ENCODE measurements at regions of chr20 and their contacts with region 1.

Region 1: DNA sequence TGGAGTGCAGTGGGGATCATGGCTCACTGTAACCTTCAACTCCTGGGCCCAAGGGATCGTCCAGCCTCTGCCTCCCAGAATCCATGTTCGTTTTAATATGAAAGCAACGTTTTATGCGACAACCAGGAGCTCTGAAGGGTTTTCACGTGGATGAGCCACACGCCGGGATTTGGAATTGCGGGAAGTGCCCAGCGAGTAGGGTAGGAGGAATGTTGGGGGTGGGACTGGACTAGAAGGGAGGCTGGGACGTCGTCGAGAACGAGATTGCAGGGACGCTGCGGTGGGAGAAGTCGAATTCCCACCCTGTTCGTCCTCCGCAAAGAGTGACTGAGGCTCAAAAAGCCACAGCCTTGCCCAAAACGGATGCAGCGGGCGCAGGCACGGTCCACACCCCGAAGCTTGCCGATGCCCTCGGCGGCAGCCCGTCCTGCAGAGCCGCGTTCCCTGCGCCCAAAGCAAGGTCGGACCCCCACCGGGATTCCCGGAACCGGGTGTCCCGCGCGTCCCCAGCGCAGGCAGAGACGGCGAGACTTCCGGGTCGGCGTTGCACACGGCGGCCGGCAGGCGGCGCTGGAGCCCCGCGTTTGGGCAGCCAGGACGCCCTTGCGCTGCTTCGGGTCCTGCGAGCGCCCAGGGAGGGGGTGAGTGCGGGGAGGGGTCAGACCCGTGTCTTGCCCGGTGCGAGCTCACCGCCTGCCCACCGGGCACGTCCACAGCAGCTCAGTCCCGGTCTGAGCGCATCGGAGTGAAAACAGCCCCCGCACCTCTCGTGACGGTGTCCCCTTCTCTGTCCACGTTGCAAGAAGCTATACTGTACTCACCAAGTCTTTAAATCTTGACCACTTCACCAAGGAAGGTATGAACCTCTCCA is 87.8 kb downstream of the DHX35 start:
- DNase-seq: peak; percentile 76
- H3K4me3 Mint-ChIP-seq: peak overlapping the region; percentile 85
- H3K27ac Mint-ChIP-seq: peak overlapping the region; percentile 80
- H3K4me1 Mint-ChIP-seq: peaks cover 4% of the 10 kb centered on the region
- H3K27me3 Mint-ChIP-seq: peaks cover 5% of the 10 kb centered on the region

Region 2: GRCh38 chr20:38926142-38926933 is 123.6 kb before region 1 on chr20 and contains the start of gene FAM83D:
- intact Hi-C with region 1: loop called (anchors 1 kb)
- DNase-seq: peak; percentile 97
- H3K4me3 Mint-ChIP-seq: peak within 1 kb of the TSS; percentile 86
- H3K27ac Mint-ChIP-seq: peak within 1 kb of the TSS; percentile 81
- H3K4me1 Mint-ChIP-seq: peaks cover 39% of the 10 kb centered on the region
- H3K27me3 Mint-ChIP-seq: no peaks in the 10 kb centered on the region
- total RNA-seq, gene FAM83D: 11.0 and 12.4 TPM in 2 replicates

Region 3: GRCh38 chr20:38962044-38962927 is 87.6 kb before region 1 on chr20 and contains the start of gene DHX35:
- intact Hi-C with region 1: loop called (anchors 1 kb)
- DNase-seq: peak; percentile 99
- H3K4me3 Mint-ChIP-seq: peak within 1 kb of the TSS; percentile 98
- H3K27ac Mint-ChIP-seq: peak within 1 kb of the TSS; percentile 94
- H3K4me1 Mint-ChIP-seq: peaks cover 35% of the 10 kb centered on the region
- H3K27me3 Mint-ChIP-seq: no peaks in the 10 kb centered on the region
- total RNA-seq, gene DHX35: 17.2 and 17.3 TPM in 2 replicates

Region 4: GRCh38 chr20:38997622-38998021 is 52.3 kb before region 1 on chr20:
- intact Hi-C with region 1: loop called (anchors 1 kb)
- DNase-seq: peak; percentile 15
- H3K4me3 Mint-ChIP-seq: peak overlapping the region; percentile 46
- H3K27ac Mint-ChIP-seq: peak overlapping the region; percentile 71
- H3K4me1 Mint-ChIP-seq: peaks cover 38% of the 10 kb centered on the region
- H3K27me3 Mint-ChIP-seq: no peaks in the 10 kb centered on the region

Region 5: GRCh38 chr20:39081255-39081654 is 31.3 kb after region 1 on chr20:
- intact Hi-C with region 1: loop called (anchors 1 kb)
- DNase-seq: peak; percentile 64
- H3K4me3 Mint-ChIP-seq: no peak overlapping the region
- H3K27ac Mint-ChIP-seq: no peak overlapping the region
- H3K4me1 Mint-ChIP-seq: peaks cover 7% of the 10 kb centered on the region
- H3K27me3 Mint-ChIP-seq: peaks cover 16% of the 10 kb centered on the region

Region 6: GRCh38 chr20:40689943-40690835 is 1640.3 kb after region 1 on chr20:
- intact Hi-C with region 1: loop called (anchors 2 kb)
- DNase-seq: peak; percentile 64
- H3K4me3 Mint-ChIP-seq: peak overlapping the region; percentile 66
- H3K27ac Mint-ChIP-seq: peak overlapping the region; percentile 70
- H3K4me1 Mint-ChIP-seq: no peaks in the 10 kb centered on the region
- H3K27me3 Mint-ChIP-seq: peaks cover 81% of the 10 kb centered on the region

Measured in activated T-helper 1 cell treated with anti-CD3 and anti-CD28 coated beads, Interleukin-12 subunit alpha, Interleukin-12 subunit beta, Interleukin-2, Interleukin-4 antibody, amounts not matched to agents 30 ng/mL and 10 ng/mL and 1 ng/mL, durations not matched to agents 14 hours and 24 hours and 36 hours (primary cell).